HAP-1 (cell line): ENCODE measurements at regions of chr1 and their contacts with region 1.

Region 1: DNA sequence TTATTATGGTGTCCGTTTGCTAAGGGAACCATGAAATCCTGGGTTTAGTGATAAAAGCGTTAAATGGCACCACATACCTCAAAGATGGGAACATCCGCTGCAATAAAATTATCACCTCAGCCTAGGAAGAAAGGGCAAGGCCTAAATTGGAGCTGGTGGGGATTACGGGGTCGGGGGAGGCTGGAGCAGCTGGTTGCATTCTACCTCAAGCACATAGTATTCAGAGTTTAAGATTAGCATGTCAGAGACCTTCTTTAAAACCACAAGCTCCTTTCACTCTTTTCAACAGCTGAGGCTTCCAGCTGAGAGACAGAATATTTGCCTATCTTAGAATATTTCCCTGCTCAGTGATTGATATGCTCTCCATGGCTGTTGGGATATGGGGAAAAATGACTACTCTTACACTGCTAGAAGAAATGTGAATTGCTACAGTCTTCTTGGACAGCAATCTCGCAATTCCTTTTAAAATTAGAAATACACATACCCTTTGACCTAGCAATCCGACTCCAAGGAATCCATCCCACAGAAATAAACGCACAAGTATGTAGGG is 248.6 kb downstream of the TBX15 start:
- DNase-seq: peak in 1 of 2 experiments; percentile 7
- H3K4me3 ChIP-seq: no peak overlapping the region
- H3K4me1 ChIP-seq: no peaks in the 10 kb centered on the region
- H3K27me3 ChIP-seq: no peaks in the 10 kb centered on the region

Region 2: DNA sequence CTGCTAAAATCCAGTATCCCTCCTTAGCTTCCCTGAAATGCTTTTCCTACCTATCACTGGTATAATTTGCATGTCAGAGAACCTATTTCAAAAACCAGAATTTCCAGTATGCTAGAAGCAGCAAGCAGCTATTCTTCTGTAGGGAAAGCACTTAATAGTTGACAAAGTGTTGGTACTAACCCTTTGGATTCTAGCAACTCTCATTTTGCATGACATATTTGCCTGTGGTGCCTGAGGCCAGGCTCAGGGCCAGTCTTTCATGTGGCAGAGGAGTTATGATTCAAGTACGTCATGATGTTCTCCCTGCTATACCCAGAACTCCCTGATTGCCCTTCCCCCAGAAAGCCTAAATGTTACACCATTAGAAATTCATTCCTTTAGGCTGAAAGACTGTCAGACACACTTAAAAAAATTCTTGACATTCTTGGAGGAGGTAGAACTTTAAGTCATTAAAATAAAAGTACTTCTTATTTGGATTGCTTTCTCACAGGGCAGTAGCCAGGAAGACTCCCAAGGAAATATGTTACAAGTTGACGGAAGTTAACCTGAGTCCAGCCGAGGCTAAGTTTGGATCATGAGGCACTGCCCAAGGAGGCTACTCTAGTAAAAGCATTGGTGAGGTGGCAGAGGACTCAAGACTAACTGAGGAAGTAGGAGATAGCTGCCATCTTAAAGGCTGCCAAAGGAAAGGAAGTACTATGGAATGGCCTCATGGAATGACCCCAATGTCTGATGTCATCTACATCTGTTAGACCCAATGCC is 256.1 kb before region 1 on chr1:
- in situ Hi-C with region 1: no loop called
- DNase-seq: no peak
- H3K4me3 ChIP-seq: no peak overlapping the region
- H3K4me1 ChIP-seq: peaks cover 5% of the 10 kb centered on the region
- H3K27me3 ChIP-seq: no peaks in the 10 kb centered on the region

Region 3: GRCh38 chr1:118842452-118843201 is 103.1 kb after region 1 on chr1:
- in situ Hi-C with region 1: loop called (anchors 25 kb)
- DNase-seq: no peak
- H3K4me3 ChIP-seq: no peak overlapping the region
- H3K4me1 ChIP-seq: no peaks in the 10 kb centered on the region
- H3K27me3 ChIP-seq: no peaks in the 10 kb centered on the region

Region 4: DNA sequence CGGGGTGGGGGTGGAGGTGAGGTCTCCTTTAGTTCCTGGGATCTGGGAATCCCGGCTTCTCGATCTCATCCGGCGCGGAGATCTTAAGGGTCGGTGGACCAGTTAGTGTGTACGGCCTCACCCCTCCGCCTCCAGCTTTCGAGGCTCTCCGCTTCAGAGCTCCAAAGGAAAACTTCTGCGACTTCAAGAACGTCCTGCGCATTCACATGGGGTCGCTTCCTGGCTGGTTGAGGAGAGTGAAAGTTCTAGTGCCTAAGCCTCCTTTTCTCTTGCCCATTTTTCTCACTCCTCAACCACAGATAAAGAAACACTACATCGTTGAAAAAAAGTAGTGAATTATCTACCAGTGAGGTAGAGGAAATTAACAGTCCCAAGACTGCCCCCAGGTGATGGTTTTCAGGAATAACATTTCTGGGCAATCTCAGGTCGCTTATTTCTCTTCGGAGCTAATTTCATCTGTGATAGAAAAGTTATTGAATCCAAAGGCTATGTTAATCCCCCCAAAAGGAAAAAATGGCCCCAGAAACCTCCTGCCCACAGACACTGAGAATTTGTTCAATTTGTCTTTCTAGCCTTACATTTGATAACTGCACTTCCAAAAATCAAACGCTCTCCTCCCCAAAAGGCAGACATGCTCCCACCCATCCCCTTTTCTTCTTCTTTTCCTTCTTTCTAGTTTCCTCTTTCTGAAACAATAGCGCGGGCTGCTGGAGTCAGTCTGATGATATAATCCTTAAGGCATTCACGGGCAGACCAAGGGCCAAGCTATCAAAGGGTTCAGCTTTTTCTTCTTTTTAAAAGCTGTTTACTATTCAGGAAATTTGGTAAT is 269.2 kb after region 1 on chr1:
- in situ Hi-C with region 1: loop called (anchors 25 kb)
- DNase-seq: peak; percentile 24 to 59
- H3K4me3 ChIP-seq: no peak overlapping the region
- H3K4me1 ChIP-seq: no peaks in the 10 kb centered on the region
- H3K27me3 ChIP-seq: 0 out of 2 replicates have a peak, but pooled peaks cover 2% of the 10 kb centered on the region

Region 5: DNA sequence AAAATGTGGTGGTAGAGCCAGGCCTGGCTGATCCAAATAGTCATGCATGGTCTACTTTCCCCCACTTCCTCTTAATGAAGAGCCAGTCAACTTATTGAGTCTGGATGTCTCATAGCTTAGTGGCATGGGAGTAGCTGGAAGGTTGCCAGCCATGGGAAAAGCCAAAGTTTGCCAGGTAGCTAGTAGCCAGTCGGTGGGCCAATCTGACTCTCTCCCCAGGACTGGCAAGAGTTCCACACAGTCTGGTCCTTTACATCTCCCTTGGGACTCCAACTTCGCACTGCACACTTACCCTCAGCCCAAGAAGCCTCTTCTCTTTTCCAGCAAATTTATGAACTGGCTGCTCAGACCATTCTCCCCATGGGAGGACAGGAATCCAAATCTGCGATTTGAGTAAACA is 392.7 kb after region 1 on chr1:
- in situ Hi-C with region 1: no loop called
- DNase-seq: no peak
- H3K4me3 ChIP-seq: no peak overlapping the region
- H3K4me1 ChIP-seq: no peaks in the 10 kb centered on the region
- H3K27me3 ChIP-seq: no peaks in the 10 kb centered on the region